A549 (cell line): ENCODE measurements at regions of chr9 and their contacts with region 1.

Region 1: GRCh38 chr9:128420060-128420650 is 502 bp upstream of the CERCAM start:
- DNase-seq: peak; percentile 60 to 71
- ATAC-seq: peak; percentile 88
- H3K4me3 ChIP-seq: peak overlapping the region; percentile 80
- H3K27ac ChIP-seq: peak overlapping the region; percentile 84 to 95
- H3K4me1 ChIP-seq: peaks cover 17% of the 10 kb centered on the region; the same call in 2 of the 3 replicates
- CTCF ChIP-seq: peak; percentile 91
- EP300 ChIP-seq: no peak
- POLR2A ChIP-seq: peak; percentile 28
- RAD21 ChIP-seq: peak; percentile 24 to 45; a peak in 3 of 5 replicates

Region 2: GRCh38 chr9:128383007-128383753 is 37.0 kb before region 1 on chr9:
- CTCF ChIA-PET with region 1: interaction called, 17 read pairs
- POLR2A ChIA-PET with region 1: no interaction called
- DNase-seq: no peak
- ATAC-seq: no peak
- H3K4me3 ChIP-seq: no peak overlapping the region
- H3K27ac ChIP-seq: no peak overlapping the region
- H3K4me1 ChIP-seq: no peaks in the 10 kb centered on the region
- CTCF ChIP-seq: no peak
- EP300 ChIP-seq: no peak
- POLR2A ChIP-seq: no peak
- RAD21 ChIP-seq: no peak